ENCODE measurements at regions of chr16 and their contacts with region 1.

Region 1: DNA sequence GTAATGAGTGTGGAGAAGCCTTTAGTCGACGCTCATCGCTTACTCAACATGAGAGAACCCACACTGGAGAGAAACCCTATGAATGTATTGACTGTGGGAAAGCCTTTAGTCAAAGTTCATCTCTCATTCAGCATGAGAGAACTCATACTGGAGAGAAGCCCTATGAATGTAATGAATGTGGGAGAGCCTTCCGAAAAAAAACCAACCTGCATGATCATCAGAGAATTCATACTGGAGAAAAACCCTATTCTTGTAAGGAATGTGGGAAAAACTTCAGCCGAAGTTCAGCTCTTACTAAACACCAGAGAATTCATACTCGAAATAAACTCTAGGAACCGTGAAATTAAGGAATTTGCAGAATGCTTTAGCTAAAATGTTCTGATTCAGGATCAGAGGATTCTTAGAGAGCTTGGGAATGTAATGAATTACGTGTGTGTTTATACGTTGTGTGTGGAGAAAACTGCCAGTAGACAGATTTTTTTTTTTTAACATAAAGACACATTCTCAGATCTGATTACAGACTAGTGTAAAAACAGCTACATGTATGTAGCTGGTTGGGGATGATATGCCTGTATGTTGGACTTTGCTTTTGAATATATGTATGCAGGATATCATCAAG is 25.4 kb downstream of the ZFP90 start:
- DNase-seq: no peak
- ATAC-seq: no peak
- H3K4me3 ChIP-seq: no peak overlapping the region
- H3K27ac ChIP-seq: no peak overlapping the region
- H3K4me1 ChIP-seq: no peaks in the 10 kb centered on the region
- H3K27me3 ChIP-seq: no peaks in the 10 kb centered on the region
- CTCF ChIP-seq: no peak
- EP300 ChIP-seq: no peak
- POLR2A ChIP-seq: no peak
- RAD21 ChIP-seq: no peak

Region 2: DNA sequence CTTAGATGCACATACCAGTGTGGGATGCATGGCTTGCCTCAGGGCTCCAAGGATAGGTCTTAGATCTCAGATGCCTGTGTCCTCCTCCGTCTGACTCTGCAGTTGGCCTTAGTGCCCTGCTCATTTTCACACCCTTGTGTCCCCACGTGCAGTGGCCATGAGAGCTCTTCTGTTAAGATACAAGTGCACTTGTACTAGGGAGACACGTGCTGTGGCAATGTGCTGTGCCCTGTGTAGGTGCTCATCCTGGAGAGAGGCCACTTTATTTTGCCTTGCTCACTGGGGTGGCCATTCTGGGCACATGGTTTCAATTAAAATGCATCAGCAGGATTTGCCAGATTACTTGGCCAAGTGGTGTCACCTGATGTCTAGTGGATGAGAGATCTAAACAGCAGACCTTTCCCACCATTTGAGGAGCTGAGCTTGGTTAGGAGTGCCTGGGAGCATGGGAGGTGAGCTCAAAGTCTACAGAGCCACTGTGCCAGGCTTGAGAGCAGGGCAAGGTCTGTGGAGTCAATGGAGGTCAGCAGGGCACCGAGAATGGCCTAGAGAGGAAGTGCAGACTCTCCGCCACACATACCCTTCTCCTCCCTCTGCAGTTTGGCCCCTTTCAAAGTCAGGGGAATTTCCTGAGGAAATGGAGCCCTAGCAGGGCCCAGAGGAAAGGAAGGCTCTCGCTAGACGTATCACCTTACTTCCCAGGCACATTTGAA is 91.0 kb before region 1 on chr16:
- CTCF ChIA-PET with region 1: no interaction called
- POLR2A ChIA-PET with region 1: no interaction called
- RAD21 ChIA-PET with region 1: no interaction called
- SMC1A ChIA-PET with region 1: no interaction called
- in situ Hi-C with region 1: no loop called
- intact Hi-C with region 1: no loop called
- DNase-seq: peak; percentile 17
- ATAC-seq: no peak
- H3K4me3 ChIP-seq: no peak overlapping the region
- H3K27ac ChIP-seq: no peak overlapping the region
- H3K4me1 ChIP-seq: peaks cover 40% of the 10 kb centered on the region
- H3K27me3 ChIP-seq: no peaks in the 10 kb centered on the region
- CTCF ChIP-seq: no peak
- EP300 ChIP-seq: no peak
- POLR2A ChIP-seq: no peak
- RAD21 ChIP-seq: no peak

Region 3: GRCh38 chr16:68575082-68575481 is 10.6 kb after region 1 on chr16:
- CTCF ChIA-PET with region 1: no interaction called
- POLR2A ChIA-PET with region 1: no interaction called
- RAD21 ChIA-PET with region 1: no interaction called
- SMC1A ChIA-PET with region 1: interaction called, 3 read pairs
- in situ Hi-C with region 1: no loop called
- intact Hi-C with region 1: loop called (anchors 1 kb)
- DNase-seq: no peak
- ATAC-seq: no peak
- H3K4me3 ChIP-seq: no peak overlapping the region
- H3K27ac ChIP-seq: no peak overlapping the region
- H3K4me1 ChIP-seq: no peaks in the 10 kb centered on the region
- H3K27me3 ChIP-seq: no peaks in the 10 kb centered on the region
- CTCF ChIP-seq: no peak
- EP300 ChIP-seq: no peak
- POLR2A ChIP-seq: no peak
- RAD21 ChIP-seq: no peak

Region 4: DNA sequence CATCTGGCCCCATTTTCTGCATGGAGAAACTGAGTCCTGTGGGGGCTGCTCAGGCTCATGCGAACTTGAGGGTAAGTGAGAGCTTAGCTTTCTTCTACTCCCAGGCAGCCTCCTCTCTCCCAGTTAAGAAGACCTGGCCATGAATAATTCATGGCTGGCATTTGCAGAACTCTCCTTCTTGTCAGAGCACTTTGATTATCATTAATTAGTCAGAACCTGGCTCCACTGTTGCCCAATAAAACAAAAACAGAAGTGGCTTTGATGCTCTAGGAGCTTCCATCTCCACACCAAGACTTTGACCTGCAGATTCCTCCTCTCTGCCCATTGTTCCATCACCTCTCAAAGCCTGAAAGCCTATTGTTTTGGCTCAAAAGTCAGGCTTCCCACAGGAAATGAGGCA is 35.1 kb after region 1 on chr16:
- CTCF ChIA-PET with region 1: no interaction called
- POLR2A ChIA-PET with region 1: no interaction called
- RAD21 ChIA-PET with region 1: no interaction called
- SMC1A ChIA-PET with region 1: no interaction called
- in situ Hi-C with region 1: no loop called
- intact Hi-C with region 1: no loop called
- DNase-seq: no peak
- ATAC-seq: no peak
- H3K4me3 ChIP-seq: no peak overlapping the region
- H3K27ac ChIP-seq: no peak overlapping the region
- H3K4me1 ChIP-seq: no peaks in the 10 kb centered on the region
- H3K27me3 ChIP-seq: no peaks in the 10 kb centered on the region
- CTCF ChIP-seq: no peak
- EP300 ChIP-seq: no peak
- POLR2A ChIP-seq: no peak
- RAD21 ChIP-seq: no peak

Region 5: DNA sequence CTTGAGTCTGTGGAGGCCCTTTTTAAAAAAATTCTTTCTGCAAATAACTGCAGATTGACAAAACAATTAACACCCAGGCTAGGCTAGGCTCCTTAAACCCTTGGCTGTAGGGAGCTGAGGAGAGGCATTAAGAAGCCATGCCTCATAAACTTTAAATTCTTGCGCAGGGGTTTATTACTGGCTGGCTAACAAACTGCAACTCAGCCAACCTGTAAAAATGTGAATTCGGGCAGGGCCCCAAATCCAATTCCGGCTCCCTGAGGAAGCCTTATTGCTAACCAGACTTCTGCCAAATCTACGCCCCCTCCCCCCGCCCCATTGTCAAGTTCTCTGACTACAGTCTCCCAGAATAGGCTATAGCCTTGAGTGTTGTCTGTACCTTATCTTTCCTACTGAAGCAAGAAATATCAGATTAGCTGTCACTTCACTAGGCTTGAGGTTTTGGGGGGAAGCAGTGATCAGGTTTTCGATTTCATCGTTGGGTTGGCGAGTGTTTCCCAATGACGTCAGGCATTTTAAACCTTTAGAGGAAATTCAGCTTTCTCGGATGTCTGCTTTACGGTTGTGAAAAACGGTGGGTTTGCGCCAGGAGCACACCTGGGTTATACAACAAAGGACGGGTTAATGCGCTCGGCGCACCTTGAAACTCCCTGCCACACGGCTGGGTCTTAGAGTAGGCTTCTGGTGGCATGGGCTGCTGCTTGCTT is 82.6 kb after region 1 on chr16:
- CTCF ChIA-PET with region 1: no interaction called
- POLR2A ChIA-PET with region 1: no interaction called
- RAD21 ChIA-PET with region 1: no interaction called
- SMC1A ChIA-PET with region 1: no interaction called
- in situ Hi-C with region 1: no loop called
- intact Hi-C with region 1: no loop called
- DNase-seq: no peak
- ATAC-seq: no peak
- H3K4me3 ChIP-seq: no peak overlapping the region
- H3K27ac ChIP-seq: no peak overlapping the region
- H3K4me1 ChIP-seq: no peaks in the 10 kb centered on the region
- H3K27me3 ChIP-seq: peaks cover 9 to 16% of the 10 kb centered on the region in 2 experiments
- CTCF ChIP-seq: no peak
- EP300 ChIP-seq: no peak
- POLR2A ChIP-seq: no peak
- RAD21 ChIP-seq: no peak

Measured in GM12878 (cell line).